ENCODE measurements at regions of chr9 and their contacts with region 1.

Region 1: GRCh38 chr9:77464661-77465060 is 183.5 kb downstream of the GNA14 start:
- DNase-seq: no peak
- H3K4me3 ChIP-seq: no peak overlapping the region
- H3K27ac ChIP-seq: no peak overlapping the region
- H3K4me1 ChIP-seq: no peaks in the 10 kb centered on the region
- H3K27me3 ChIP-seq: no peaks in the 10 kb centered on the region
- CTCF ChIP-seq: no peak
- POLR2A ChIP-seq: no peak

Region 2: GRCh38 chr9:76987594-76988200 is 477.0 kb before region 1 on chr9:
- intact Hi-C with region 1: loop called (anchors 5 kb)
- DNase-seq: no peak
- H3K4me3 ChIP-seq: no peak overlapping the region
- H3K27ac ChIP-seq: no peak overlapping the region
- H3K4me1 ChIP-seq: no peaks in the 10 kb centered on the region
- H3K27me3 ChIP-seq: peaks cover 0 to 4% of the 10 kb centered on the region in 2 donors
- CTCF ChIP-seq: no peak
- POLR2A ChIP-seq: no peak

Measured in breast epithelium (tissue), 4 donors.